Dendritic cell treated with granulocyte-macrophage colony-stimulating factor and Interleukin-4, amounts not matched to agents 40 ng/mL and 50 ng/mL, for 4 days (primary cell): ENCODE measurements at regions of chr18 and their contacts with region 1.

Region 1: DNA sequence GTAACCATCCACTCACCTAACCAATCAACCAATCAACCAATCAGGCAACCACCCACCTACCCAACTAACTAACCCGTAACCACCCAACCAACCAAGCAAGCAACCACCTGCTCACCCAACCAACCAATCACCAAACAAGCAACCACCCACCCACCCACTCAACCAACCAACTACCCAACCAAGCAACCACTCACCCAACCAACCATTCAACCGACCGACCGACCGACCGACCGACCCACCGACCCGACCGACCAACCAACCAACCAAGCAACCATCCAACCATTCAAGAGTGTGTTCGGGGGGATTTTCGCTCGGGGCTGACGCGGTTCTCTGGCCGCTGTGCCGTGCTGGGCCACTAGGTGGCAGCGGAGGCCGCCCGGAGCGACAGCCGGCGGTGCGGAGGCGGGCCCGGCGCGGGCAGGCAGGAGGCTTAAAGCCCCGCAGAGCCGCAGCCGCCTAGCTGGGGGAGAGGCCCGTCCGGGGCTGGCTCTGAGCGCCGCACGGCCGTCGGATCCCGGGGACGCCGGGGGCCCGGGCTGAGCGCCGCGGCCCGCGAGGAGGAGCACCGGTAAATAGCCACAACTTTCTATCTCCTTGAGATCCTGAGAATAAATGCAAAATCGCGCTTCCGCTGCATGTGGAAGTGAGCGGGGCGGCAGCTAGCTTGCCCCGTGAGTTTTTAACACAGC is at the start of gene MC5R:
- H3K4me3 Mint-ChIP-seq: peak within 1 kb of the TSS; percentile 11
- H3K27ac Mint-ChIP-seq: no peak within 1 kb of the TSS
- H3K4me1 Mint-ChIP-seq: no peaks in the 10 kb centered on the region
- H3K27me3 Mint-ChIP-seq: peaks cover 31% of the 10 kb centered on the region

Region 2: GRCh38 chr18:13566941-13567746 is 256.7 kb before region 1 on chr18:
- intact Hi-C with region 1: no loop called
- H3K4me3 Mint-ChIP-seq: peak overlapping the region; percentile 46
- H3K27ac Mint-ChIP-seq: peak overlapping the region; percentile 91
- H3K4me1 Mint-ChIP-seq: peaks cover 85% of the 10 kb centered on the region
- H3K27me3 Mint-ChIP-seq: no peaks in the 10 kb centered on the region

Region 3: GRCh38 chr18:14086458-14087231 is 262.8 kb after region 1 on chr18:
- intact Hi-C with region 1: loop called (anchors 1 kb)
- H3K4me3 Mint-ChIP-seq: no peak overlapping the region
- H3K27ac Mint-ChIP-seq: no peak overlapping the region
- H3K4me1 Mint-ChIP-seq: no peaks in the 10 kb centered on the region
- H3K27me3 Mint-ChIP-seq: no peaks in the 10 kb centered on the region